Ascending aorta (tissue), 2 donors: ENCODE measurements at regions of chr5 and their contacts with region 1.

Region 1: GRCh38 chr5:172006321-172007174 is at the start of gene FBXW11:
- DNase-seq: peak; percentile 87 to 97
- H3K4me3 ChIP-seq: peak within 1 kb of the TSS; percentile 74 to 88
- H3K27ac ChIP-seq: peak within 1 kb of the TSS; percentile 97 to 99
- H3K4me1 ChIP-seq: peaks cover 6 to 37% of the 10 kb centered on the region in 2 donors
- H3K27me3 ChIP-seq: no peaks in the 10 kb centered on the region
- CTCF ChIP-seq: no peak
- total RNA-seq, gene FBXW11: 34.6 TPM

Region 2: DNA sequence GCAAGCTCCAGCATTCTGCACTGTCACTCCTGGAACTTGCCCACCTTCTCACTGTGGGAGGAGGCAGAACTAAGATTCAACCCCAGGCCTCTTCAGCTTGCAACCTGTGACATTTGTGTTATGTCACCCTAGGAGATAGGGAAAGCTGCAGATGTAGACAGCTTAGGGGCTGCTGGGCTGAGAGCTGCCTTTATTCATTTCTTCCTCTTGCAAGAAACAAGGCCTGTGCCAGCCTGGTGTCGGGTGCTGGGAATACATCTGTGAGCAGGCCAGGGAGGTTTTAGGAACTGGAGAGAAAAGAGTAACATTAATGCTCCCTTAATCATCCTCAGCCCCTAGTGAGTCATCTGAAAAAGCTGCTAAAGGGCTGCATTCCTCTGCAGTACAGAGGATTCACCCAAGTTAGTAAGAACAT is 485.3 kb before region 1 on chr5:
- intact Hi-C with region 1: loop called (anchors 10 kb)
- DNase-seq: peak in 1 of 2 donors; percentile 92
- H3K4me3 ChIP-seq: no peak overlapping the region
- H3K27ac ChIP-seq: peak overlapping the region; percentile 57 to 67
- H3K4me1 ChIP-seq: peaks cover 10 to 20% of the 10 kb centered on the region in 2 donors
- H3K27me3 ChIP-seq: no peaks in the 10 kb centered on the region
- CTCF ChIP-seq: peak in 1 of 3 experiments; percentile 6

Region 3: GRCh38 chr5:171961117-171961516 is 45.4 kb before region 1 on chr5:
- intact Hi-C with region 1: loop called (anchors 10 kb)
- DNase-seq: no peak
- H3K4me3 ChIP-seq: no peak overlapping the region
- H3K27ac ChIP-seq: no peak overlapping the region
- H3K4me1 ChIP-seq: peaks cover 6 to 36% of the 10 kb centered on the region in 2 donors
- H3K27me3 ChIP-seq: no peaks in the 10 kb centered on the region
- CTCF ChIP-seq: no peak

Region 4: GRCh38 chr5:172454358-172455086 is 448.0 kb after region 1 on chr5 and contains the start of gene SH3PXD2B:
- intact Hi-C with region 1: loop called (anchors 10 kb)
- DNase-seq: peak in 1 of 2 donors; percentile 80
- H3K4me3 ChIP-seq: peak within 1 kb of the TSS; percentile 89 to 94
- H3K27ac ChIP-seq: peak within 1 kb of the TSS; percentile 83 to 87
- H3K4me1 ChIP-seq: peaks cover 9 to 19% of the 10 kb centered on the region in 2 donors
- H3K27me3 ChIP-seq: no peaks in the 10 kb centered on the region
- CTCF ChIP-seq: no peak
- total RNA-seq, gene SH3PXD2B: 60.8 TPM